Colonic mucosa (tissue), 4 donors: ENCODE measurements at regions of chr14 and their contacts with region 1.

Region 1: GRCh38 chr14:37874429-37875191 is 279.2 kb downstream of the TTC6 start:
- DNase-seq: peak; percentile 92
- H3K4me3 ChIP-seq: no peak overlapping the region
- H3K27ac ChIP-seq: no peak overlapping the region
- H3K4me1 ChIP-seq: no peaks in the 10 kb centered on the region
- H3K27me3 ChIP-seq: no peaks in the 10 kb centered on the region
- CTCF ChIP-seq: peak; percentile 82

Region 2: DNA sequence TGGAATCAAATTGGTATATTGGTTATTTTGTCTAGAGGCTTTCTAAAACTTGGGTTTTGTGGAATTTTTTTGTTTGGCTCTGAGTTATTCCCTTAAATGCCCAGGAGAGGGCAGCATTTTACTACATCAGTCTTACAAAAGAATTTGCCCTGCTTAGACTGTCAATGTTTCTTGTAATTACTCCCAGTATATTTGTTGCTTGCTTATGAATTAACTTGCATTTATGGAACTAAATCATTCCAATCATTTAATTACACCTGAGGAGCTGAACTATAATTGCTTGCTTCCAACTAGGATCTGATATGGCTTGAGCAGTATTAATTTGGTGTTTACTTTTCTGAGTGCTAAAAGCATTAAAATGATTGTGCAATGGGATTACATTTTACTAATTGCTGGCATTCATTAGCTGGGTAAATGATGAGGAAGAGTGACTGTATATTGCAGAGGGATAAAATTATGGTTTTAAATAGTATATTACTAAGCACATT is 628.1 kb before region 1 on chr14:
- intact Hi-C with region 1: loop called (anchors 5 kb)
- DNase-seq: no peak
- H3K4me3 ChIP-seq: no peak overlapping the region
- H3K27ac ChIP-seq: no peak overlapping the region
- H3K4me1 ChIP-seq: no peaks in the 10 kb centered on the region
- H3K27me3 ChIP-seq: no peaks in the 10 kb centered on the region
- CTCF ChIP-seq: peak; percentile 75

Region 3: GRCh38 chr14:37599507-37600368 is 274.9 kb before region 1 on chr14:
- intact Hi-C with region 1: loop called (anchors 10 kb)
- DNase-seq: peak; percentile 31
- H3K4me3 ChIP-seq: peak overlapping the region; percentile 30
- H3K27ac ChIP-seq: peak overlapping the region; percentile 89
- H3K4me1 ChIP-seq: peaks cover 6% of the 10 kb centered on the region
- H3K27me3 ChIP-seq: peaks cover 39% of the 10 kb centered on the region
- CTCF ChIP-seq: no peak

Region 4: GRCh38 chr14:37709419-37710195 is 165.0 kb before region 1 on chr14:
- intact Hi-C with region 1: loop called (anchors 2 kb)
- DNase-seq: no peak
- H3K4me3 ChIP-seq: no peak overlapping the region
- H3K27ac ChIP-seq: no peak overlapping the region
- H3K4me1 ChIP-seq: no peaks in the 10 kb centered on the region
- H3K27me3 ChIP-seq: no peaks in the 10 kb centered on the region
- CTCF ChIP-seq: no peak